ENCODE measurements at regions of chr3 and their contacts with region 1.

Region 1: DNA sequence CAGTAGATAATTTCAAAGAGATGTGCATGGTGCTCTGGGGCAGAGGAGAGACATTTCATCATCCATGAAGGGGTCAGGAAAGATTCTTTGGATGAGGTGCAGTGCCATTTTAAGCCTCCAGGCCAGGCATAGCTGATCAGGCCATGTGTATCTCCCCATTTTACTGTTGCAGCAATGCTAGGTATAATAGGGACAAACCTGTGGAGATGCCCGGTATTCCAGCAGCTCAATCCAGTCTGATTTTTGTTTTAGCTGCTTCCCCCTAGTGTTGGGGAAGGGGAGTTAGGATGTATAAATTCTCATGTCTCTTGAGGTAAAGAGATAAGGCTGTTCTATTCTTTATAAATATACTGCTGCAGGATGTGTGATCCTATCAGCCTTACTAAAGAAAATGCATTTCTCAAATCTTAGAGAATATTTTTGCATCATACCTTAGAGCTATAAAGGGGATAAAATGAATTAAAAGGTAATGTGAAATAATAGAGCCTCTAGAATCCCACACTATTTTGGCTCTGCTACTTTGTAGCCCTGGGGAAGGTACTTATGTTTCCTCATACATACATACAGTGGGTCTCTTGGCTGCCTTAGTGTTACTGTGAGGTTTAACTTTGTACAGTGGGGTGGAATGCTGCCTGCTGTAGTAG is 5.2 kb downstream of the CDV3 start:
- DNase-seq: peak; percentile 63
- ATAC-seq: peak; percentile 53
- H3K4me3 ChIP-seq: peak overlapping the region; percentile 19; the same call in 1 of the 2 replicates
- H3K27ac ChIP-seq: no peak overlapping the region
- H3K4me1 ChIP-seq: peaks cover 19% of the 10 kb centered on the region
- H3K27me3 ChIP-seq: no peaks in the 10 kb centered on the region
- CTCF ChIP-seq: peak; percentile 70

Region 2: DNA sequence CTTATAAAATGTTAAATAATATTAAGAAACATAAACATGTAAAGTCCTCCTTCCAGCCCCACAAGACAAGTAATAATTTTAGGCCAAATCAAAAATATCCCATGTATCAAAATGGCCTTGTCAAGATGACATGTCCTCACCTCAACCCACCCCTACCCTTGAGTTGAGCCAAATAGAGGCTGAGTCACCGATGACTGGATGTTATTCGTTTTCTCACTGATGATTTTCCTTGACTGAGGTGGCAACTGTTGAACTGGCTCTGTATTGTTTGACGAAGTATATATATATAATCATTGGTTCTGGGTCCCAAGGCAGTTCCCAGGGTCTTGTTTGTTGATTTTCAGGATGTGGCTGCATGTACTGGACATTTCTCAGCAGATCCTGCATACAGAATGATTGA is 465.1 kb before region 1 on chr3:
- CTCF ChIA-PET with region 1: no interaction called
- POLR2A ChIA-PET with region 1: no interaction called
- intact Hi-C with region 1: no loop called
- DNase-seq: peak; percentile 37
- ATAC-seq: no peak
- H3K4me3 ChIP-seq: no peak overlapping the region
- H3K27ac ChIP-seq: no peak overlapping the region
- H3K4me1 ChIP-seq: no peaks in the 10 kb centered on the region
- H3K27me3 ChIP-seq: no peaks in the 10 kb centered on the region; the same call in 1 of the 2 replicates
- CTCF ChIP-seq: no peak

Region 3: DNA sequence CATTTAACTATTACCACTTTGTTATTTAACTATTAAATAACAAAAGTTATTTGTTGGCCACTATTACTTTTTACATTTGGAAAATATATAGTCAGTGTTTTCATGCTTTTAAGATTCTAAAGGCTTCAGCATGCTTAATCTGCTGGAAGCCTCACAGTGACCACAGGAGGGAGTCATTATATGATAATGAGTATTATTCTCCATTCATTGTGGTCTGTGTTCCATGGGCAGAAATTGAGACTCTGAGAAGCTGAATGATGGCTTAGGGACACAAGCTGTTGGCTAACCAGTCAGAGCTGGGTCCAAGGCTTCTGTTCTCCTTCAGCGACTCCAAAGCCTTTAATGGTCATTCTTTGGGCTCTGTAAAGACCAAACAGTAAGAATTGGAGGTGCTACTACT is 114.1 kb before region 1 on chr3:
- CTCF ChIA-PET with region 1: interaction called, 5 read pairs
- POLR2A ChIA-PET with region 1: no interaction called
- intact Hi-C with region 1: loop called (anchors 1 kb)
- DNase-seq: peak; percentile 62
- ATAC-seq: peak; percentile 87
- H3K4me3 ChIP-seq: no peak overlapping the region
- H3K27ac ChIP-seq: no peak overlapping the region
- H3K4me1 ChIP-seq: peaks cover 6% of the 10 kb centered on the region; the same call in 1 of the 2 replicates
- H3K27me3 ChIP-seq: no peaks in the 10 kb centered on the region
- CTCF ChIP-seq: peak; percentile 56

Region 4: GRCh38 chr3:133512399-133513089 is 66.1 kb before region 1 on chr3:
- CTCF ChIA-PET with region 1: no interaction called
- POLR2A ChIA-PET with region 1: no interaction called
- intact Hi-C with region 1: no loop called
- DNase-seq: no peak
- ATAC-seq: no peak
- H3K4me3 ChIP-seq: no peak overlapping the region
- H3K27ac ChIP-seq: no peak overlapping the region
- H3K4me1 ChIP-seq: no peaks in the 10 kb centered on the region
- H3K27me3 ChIP-seq: no peaks in the 10 kb centered on the region
- CTCF ChIP-seq: no peak

Region 5: DNA sequence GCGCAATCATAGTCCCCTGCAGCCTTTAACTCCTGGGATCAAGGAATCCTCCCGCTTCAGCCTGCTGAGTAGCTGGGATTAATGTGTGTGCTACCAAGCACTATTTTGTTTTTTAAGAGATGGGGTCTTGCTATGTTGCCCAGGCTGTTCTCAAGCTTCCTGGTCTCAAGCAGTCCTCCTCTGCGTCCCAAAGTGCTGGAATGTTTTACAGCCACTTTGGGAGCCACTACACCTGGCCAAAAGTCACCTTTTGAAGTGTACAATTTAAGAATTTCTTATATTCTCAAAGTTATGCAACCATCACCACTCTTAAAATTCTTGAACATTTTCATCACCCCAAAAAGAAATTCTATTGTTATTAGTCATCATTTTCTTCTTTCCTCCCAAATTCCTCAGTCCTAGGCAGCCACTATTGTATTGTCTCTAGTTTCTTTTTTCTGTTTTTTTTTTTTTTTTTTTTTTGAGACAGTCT is 12.6 kb after region 1 on chr3:
- CTCF ChIA-PET with region 1: no interaction called
- POLR2A ChIA-PET with region 1: no interaction called
- intact Hi-C with region 1: no loop called
- DNase-seq: peak; percentile 77
- ATAC-seq: peak; percentile 58
- H3K4me3 ChIP-seq: no peak overlapping the region
- H3K27ac ChIP-seq: no peak overlapping the region
- H3K4me1 ChIP-seq: peaks cover 35% of the 10 kb centered on the region
- H3K27me3 ChIP-seq: no peaks in the 10 kb centered on the region
- CTCF ChIP-seq: no peak

Measured in PC-3 (cell line).